MCF 10A (cell line): ENCODE measurements at regions of chr15 and their contacts with region 1.

Region 1: GRCh38 chr15:91049378-91050127 is 27.2 kb upstream of the VPS33B start:
- DNase-seq: peak; percentile 77
- H3K4me3 Mint-ChIP-seq: no peak overlapping the region
- H3K27ac Mint-ChIP-seq: no peak overlapping the region
- H3K4me1 Mint-ChIP-seq: no peaks in the 10 kb centered on the region
- H3K27me3 Mint-ChIP-seq: peaks cover 33% of the 10 kb centered on the region
- CTCF ChIP-seq: peak; percentile 52

Region 2: DNA sequence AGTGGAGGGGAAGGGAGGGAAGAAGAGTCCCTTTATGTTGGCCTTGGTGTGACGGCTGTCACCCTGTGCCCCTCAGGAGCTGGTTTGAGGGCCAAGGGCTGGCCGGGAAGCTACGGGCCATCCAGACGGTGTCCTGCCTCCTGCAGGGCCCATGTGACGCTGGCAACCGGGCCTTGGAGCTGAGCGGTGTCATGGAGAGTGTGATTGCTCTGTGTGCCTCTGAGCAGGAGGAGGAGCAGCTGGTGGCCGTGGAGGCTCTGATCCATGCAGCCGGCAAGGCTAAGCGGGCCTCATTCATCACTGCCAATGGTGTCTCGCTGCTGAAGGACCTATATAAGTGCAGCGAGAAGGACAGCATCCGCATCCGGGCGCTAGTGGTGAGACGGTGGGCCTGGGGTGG is 103.0 kb before region 1 on chr15:
- CTCF ChIA-PET with region 1: interaction called, 10 read pairs
- POLR2A ChIA-PET with region 1: no interaction called
- intact Hi-C with region 1: no loop called
- DNase-seq: no peak
- H3K4me3 Mint-ChIP-seq: no peak overlapping the region
- H3K27ac Mint-ChIP-seq: no peak overlapping the region
- H3K4me1 Mint-ChIP-seq: no peaks in the 10 kb centered on the region
- H3K27me3 Mint-ChIP-seq: no peaks in the 10 kb centered on the region
- CTCF ChIP-seq: no peak

Region 3: GRCh38 chr15:91032919-91033803 is 16.4 kb before region 1 on chr15:
- CTCF ChIA-PET with region 1: interaction called, 22 read pairs
- POLR2A ChIA-PET with region 1: interaction called, 3 read pairs
- intact Hi-C with region 1: no loop called
- DNase-seq: peak; percentile 80
- H3K4me3 Mint-ChIP-seq: no peak overlapping the region
- H3K27ac Mint-ChIP-seq: no peak overlapping the region
- H3K4me1 Mint-ChIP-seq: no peaks in the 10 kb centered on the region
- H3K27me3 Mint-ChIP-seq: peaks cover 26% of the 10 kb centered on the region
- CTCF ChIP-seq: peak; percentile 80

Region 4: DNA sequence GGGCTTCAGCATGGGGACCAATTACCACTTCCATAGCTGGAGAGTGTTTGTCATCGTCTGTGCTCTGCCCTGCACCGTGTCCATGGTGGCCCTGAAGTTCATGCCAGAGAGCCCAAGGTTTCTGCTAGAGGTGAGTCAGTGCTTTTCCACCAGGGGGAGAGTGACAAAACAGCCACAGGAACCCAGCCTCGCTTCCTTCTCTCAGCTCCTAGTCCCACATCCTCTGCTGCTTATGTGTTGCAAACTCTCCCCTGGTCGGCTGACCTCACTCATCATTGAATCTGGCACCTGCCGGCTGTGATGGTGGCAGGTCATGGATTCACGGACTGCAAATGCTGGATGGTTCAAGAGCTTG is 208.8 kb after region 1 on chr15:
- CTCF ChIA-PET with region 1: interaction called, 10 read pairs
- POLR2A ChIA-PET with region 1: no interaction called
- intact Hi-C with region 1: no loop called
- DNase-seq: peak; percentile 18
- H3K4me3 Mint-ChIP-seq: no peak overlapping the region
- H3K27ac Mint-ChIP-seq: no peak overlapping the region
- H3K4me1 Mint-ChIP-seq: no peaks in the 10 kb centered on the region
- H3K27me3 Mint-ChIP-seq: peaks cover 23% of the 10 kb centered on the region
- CTCF ChIP-seq: no peak